ENCODE measurements at regions of chrX and their contacts with region 1.

Region 1: DNA sequence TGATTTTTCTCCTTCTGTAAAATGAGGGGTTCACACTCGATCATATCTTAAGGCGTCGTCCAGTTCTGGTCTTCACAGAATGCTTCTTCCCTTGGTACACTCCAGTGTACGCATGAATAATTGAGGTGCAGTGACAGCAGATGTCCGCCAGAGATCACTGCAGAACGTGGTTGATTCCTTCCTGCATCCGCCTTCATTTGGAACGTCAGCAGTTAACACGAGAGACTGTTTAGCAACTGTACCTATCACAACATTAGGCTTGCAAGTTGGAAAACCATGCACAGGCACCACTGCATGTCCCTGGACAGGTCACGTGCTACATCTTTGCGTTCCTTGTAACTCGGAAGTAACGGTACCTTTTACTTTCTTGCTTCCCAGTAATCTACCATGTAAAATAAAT is 66.0 kb upstream of the GEMIN8 start:
- DNase-seq: peak; percentile 58 to 67
- H3K4me3 ChIP-seq: no peak overlapping the region
- H3K4me1 ChIP-seq: no peaks in the 10 kb centered on the region
- H3K27me3 ChIP-seq: peaks cover 3% of the 10 kb centered on the region; the same call in 1 of the 2 replicates

Region 2: DNA sequence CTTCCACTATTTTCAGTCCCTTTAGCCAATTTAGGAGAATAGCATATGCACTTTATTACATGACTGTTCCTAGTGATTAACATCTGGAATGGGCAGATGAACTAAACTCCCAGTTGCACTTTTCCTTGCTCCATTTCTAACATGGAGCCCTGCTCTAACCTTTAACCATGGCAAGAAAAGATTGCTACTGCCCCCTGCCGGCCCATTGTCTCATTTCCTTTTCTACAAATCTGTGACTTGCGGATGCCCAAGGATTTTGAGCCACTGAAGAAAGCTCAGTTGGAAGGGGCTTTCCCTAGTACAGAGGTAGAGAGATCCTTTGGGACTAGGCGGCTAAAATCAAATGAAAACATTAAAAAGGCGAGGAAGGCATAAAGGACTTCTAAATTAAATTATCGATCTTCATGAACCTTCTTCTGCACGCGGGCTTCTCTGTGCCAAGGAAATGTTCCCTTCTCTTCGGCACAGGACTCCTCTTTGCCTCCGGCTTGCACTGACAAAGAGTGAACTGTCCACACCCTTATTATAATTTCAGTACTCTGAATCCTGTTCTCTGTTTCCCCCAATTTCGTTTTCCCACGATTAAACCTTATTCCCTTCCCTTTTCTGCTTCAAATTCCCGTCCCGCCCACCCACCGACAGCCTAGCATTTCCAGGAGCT is 433.1 kb after region 1 on chrX:
- in situ Hi-C with region 1: loop called (anchors 10 kb)
- DNase-seq: peak; percentile 41 to 83
- H3K4me3 ChIP-seq: no peak overlapping the region
- H3K4me1 ChIP-seq: no peaks in the 10 kb centered on the region
- H3K27me3 ChIP-seq: no peaks in the 10 kb centered on the region

Region 3: DNA sequence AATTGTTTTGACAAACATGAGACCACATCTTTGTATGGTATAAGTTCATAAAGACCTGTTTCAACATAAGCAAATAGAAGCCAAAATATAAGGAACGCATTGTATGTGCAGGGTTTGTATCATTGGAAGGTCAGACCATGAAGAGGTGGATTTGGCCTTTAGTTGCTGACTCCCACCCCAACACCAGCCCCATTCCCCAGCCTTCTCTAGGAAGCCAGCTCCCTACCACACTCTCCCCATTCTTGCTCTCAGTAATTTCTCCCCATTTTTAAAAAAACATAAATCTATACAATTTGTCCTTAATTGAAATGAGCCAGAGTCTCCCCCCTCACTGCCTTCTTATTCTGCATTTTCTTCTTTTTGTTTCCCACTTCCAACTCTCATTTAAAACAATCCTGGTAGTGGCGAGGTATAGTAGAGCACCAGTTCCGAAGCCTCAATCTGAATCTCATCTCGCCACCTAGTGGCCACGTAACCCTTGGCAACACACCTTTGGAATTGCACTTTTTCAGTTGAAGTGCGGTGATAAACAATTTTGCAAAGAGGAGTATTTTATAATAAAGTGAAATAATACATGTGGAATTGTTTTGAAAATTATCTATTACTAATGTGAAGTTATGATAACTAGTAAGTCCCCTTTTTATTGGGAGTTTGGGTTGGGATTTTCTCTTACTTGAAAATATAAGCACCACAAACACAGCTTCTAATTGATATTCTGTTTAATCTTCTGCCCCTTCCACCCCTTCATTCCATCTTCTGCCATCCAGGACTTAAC is 1047.5 kb after region 1 on chrX:
- in situ Hi-C with region 1: loop called (anchors 10 kb)
- DNase-seq: peak; percentile 32 to 73
- H3K4me3 ChIP-seq: no peak overlapping the region
- H3K4me1 ChIP-seq: no peaks in the 10 kb centered on the region
- H3K27me3 ChIP-seq: no peaks in the 10 kb centered on the region

Measured in HAP-1 (cell line).